Activated T-helper 1 cell treated with anti-CD3 and anti-CD28 coated beads, Interleukin-12 subunit alpha, Interleukin-12 subunit beta, Interleukin-2, Interleukin-4 antibody, amounts not matched to agents 30 ng/mL and 10 ng/mL and 1 ng/mL, durations not matched to agents 14 hours and 24 hours and 36 hours (primary cell): ENCODE measurements at regions of chr19 and their contacts with region 1.

Region 1: DNA sequence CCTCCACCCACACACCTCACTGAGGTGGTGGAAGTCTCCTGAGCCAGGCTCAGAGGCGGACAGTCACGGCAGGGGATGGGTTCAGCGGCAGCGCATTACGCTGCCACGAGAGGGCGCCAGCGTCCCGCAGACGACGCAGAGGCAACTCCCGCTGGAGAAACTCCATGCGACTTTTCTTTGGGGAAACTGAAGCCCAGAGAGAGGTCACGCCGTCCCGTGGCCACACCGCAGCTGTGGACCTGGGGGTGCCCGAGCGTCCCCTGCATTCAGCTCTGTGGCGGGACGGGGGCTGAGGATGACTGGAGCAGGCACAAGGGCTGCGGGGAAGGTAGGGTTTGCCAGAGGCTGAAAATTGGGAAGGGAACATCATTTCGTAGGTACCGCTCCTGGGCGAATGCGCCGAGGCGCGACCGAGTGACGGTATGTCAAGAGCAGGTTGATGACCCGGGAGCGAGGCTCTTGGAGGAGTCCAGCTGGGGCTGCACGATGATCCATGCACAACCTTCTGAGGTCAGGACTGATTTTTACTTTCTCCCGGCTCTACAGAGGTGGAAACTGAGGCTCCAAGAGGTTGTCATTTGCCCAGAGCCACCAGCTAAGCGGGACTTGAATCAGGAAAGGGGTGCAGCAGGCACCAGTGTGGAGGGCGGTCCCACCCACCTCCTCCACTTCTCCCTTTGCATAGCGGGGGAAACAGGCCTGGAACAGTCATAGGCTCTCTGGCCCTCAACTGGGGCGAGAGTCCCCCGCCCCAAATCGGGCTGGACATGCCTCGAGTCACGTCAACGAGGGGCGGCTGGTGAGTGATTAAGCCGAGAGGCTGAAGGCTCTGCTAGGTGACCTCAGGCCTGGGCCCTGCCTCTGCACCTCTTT is 690 bp upstream of the ARRDC2 start:
- DNase-seq: peak; percentile 77
- H3K4me3 Mint-ChIP-seq: peak overlapping the region; percentile 93
- H3K27ac Mint-ChIP-seq: peak overlapping the region; percentile 93
- H3K4me1 Mint-ChIP-seq: peaks cover 47% of the 10 kb centered on the region
- H3K27me3 Mint-ChIP-seq: no peaks in the 10 kb centered on the region

Region 2: GRCh38 chr19:18021121-18021755 is 14.0 kb after region 1 on chr19:
- intact Hi-C with region 1: loop called (anchors 1 kb)
- DNase-seq: peak; percentile 50
- H3K4me3 Mint-ChIP-seq: peak overlapping the region; percentile 75
- H3K27ac Mint-ChIP-seq: peak overlapping the region; percentile 95
- H3K4me1 Mint-ChIP-seq: peaks cover 68% of the 10 kb centered on the region
- H3K27me3 Mint-ChIP-seq: no peaks in the 10 kb centered on the region

Region 3: DNA sequence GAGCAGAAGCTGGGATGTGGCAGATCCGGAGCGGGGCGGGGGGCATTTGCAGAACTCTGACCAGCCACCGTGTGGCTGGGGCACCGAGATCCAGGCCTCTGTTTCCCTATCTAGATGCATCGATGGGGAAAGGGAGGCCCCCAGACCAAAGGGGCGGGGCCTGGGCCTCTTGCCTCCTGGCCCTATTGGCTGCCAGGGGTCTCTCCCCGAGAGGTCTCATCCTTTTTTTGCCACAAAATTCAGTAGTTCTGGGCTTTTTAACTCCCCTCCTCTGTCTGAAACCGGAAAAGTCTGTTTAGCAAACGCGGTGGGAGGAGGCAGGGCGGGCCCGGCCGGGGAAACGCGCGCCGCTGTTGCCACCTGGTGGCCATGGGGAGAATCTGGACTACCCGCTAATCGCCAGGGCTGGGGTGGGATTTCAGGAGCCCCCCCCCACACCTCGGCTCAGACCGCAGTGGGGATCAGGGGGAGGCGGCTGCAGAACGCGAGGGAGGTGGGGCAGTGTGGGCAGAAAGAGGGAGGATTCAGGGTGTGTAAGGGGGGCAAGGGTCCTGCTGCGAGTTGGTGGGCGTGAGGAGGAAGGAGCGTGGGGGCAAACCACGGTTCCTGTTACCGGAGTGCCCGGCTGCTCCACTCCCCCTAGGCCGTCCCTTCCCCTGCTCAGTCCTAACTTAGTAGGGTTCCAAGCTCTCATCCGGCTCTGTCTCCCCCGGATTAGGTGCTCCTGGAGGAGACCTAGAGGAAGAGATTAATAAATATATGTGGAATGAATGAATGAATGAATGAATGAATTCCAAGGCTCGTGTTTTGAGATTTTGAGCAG is 51.1 kb after region 1 on chr19:
- intact Hi-C with region 1: loop called (anchors 1 kb)
- DNase-seq: peak; percentile 74
- H3K4me3 Mint-ChIP-seq: no peak overlapping the region
- H3K27ac Mint-ChIP-seq: peak overlapping the region; percentile 52
- H3K4me1 Mint-ChIP-seq: peaks cover 17% of the 10 kb centered on the region
- H3K27me3 Mint-ChIP-seq: no peaks in the 10 kb centered on the region

Region 4: DNA sequence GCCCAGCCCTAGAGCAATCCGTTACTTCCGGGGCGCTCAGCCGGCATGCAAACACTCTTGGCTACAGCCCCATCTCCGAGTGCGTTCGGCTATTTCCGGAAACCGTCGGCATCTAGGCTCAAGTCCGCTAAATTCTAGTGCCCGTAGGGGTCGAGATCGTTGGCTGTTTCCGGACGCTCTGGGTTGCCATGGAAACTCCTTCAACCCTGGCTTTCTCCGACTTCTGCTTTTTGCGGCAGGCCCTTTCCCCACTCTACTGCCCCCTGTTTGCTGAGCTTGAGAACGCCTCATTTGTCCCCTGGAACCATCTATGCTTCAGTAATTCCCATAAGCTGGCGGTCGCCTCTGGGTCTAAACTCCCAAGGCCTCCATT is 145.2 kb after region 1 on chr19:
- intact Hi-C with region 1: loop called (anchors 2 kb)
- DNase-seq: peak; percentile 95
- H3K4me3 Mint-ChIP-seq: peak overlapping the region; percentile 84
- H3K27ac Mint-ChIP-seq: peak overlapping the region; percentile 96
- H3K4me1 Mint-ChIP-seq: peaks cover 23% of the 10 kb centered on the region
- H3K27me3 Mint-ChIP-seq: peaks cover 3% of the 10 kb centered on the region

Region 5: DNA sequence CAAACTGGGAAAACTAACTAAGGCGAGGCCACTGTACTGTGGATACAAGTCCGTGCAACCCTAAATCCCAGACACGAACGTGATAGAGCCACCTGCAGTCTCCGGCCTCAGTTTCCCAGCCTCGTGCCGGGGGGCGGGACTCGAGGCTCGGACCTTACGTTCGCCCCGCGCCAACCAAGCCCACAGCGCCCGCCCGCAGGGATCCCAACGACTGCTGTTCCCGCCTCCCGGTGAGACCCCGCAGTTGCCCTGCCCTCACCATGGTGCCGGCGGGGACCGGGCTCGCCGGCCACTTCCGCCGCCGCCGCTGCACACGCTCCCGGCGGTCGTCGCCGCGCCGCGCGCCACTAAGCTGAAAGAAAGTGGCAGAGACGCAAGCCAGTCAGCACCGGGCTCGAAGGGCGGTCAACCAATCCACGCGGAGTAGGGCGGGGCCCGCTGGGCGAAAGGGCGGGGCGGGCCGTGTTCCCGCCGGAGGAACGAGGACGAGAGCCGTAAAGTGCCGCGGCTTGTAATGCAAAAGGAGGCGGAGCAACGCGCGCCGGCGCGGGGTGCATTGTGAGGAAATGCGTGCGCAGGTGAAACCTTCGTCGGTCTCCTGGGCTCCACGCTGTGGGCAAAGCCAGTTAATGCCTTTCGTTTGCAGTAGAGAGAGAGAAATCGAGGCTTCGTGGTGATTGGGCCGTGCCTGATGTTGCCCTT is 315.6 kb after region 1 on chr19 and contains the start of gene LSM4:
- intact Hi-C with region 1: loop called (anchors 10 kb)
- DNase-seq: peak; percentile 99
- H3K4me3 Mint-ChIP-seq: peak within 1 kb of the TSS; percentile 95
- H3K27ac Mint-ChIP-seq: peak within 1 kb of the TSS; percentile 93
- H3K4me1 Mint-ChIP-seq: peaks cover 53% of the 10 kb centered on the region
- H3K27me3 Mint-ChIP-seq: no peaks in the 10 kb centered on the region
- total RNA-seq, gene LSM4: 198 and 200 TPM in 2 replicates